ENCODE measurements at regions of chr1 and their contacts with region 1.

Region 1: GRCh38 chr1:25487628-25488027 is 55.8 kb upstream of the LDLRAP1 start:
- DNase-seq: no peak
- H3K4me3 ChIP-seq: no peak overlapping the region
- H3K27ac ChIP-seq: no peak overlapping the region
- H3K4me1 ChIP-seq: no peaks in the 10 kb centered on the region
- H3K27me3 ChIP-seq: no peaks in the 10 kb centered on the region
- CTCF ChIP-seq: peak; percentile 42 to 58
- POLR2A ChIP-seq: no peak

Region 2: DNA sequence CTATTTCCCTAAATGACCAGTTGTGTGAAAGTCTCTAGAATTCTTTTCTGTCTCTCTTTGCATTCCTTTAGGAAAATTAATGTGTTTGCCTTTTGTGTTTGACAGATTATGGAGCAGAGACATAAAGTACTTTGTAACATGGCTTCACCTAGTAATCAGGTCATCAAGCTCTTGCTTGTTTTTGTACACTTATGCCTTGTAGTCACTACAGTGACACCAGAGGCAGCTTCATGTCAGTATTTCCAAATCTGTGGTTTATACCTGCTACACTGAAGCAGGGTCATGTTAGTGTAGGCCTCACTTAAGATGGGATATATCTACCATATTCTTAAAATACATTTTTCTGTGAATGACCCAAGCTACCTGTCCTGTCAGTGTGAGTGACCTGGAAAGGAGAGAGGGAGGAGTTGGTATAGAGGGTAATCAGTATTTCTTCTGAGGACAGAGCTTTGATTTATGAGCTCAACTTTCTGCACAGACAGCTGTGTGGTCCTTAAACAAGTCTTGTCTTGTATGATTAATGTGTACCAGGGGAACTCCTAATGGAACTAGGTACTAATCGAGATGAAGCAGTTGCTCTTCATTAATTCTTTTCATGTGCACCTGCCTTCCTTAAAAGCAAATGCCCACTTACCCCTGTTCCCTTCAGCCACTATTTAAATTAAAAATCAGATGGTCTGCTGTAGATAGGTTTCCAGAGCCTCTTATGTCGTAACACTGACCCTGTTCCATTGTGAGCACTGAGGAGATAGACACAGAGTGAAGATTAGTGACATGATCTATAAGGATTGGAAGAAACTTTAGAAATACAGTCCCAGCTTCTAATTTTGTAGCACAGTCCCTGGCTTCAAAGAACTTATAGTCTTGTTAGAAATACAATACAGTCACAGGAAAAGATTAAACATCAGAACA is 11.2 kb before region 1 on chr1:
- CTCF ChIA-PET with region 1: interaction called, 10 read pairs
- POLR2A ChIA-PET with region 1: no interaction called
- dilution Hi-C with region 1: no loop called
- intact Hi-C with region 1: no loop called
- DNase-seq: no peak
- H3K4me3 ChIP-seq: no peak overlapping the region
- H3K27ac ChIP-seq: no peak overlapping the region
- H3K4me1 ChIP-seq: no peaks in the 10 kb centered on the region
- H3K27me3 ChIP-seq: no peaks in the 10 kb centered on the region
- CTCF ChIP-seq: no peak
- POLR2A ChIP-seq: no peak

Region 3: DNA sequence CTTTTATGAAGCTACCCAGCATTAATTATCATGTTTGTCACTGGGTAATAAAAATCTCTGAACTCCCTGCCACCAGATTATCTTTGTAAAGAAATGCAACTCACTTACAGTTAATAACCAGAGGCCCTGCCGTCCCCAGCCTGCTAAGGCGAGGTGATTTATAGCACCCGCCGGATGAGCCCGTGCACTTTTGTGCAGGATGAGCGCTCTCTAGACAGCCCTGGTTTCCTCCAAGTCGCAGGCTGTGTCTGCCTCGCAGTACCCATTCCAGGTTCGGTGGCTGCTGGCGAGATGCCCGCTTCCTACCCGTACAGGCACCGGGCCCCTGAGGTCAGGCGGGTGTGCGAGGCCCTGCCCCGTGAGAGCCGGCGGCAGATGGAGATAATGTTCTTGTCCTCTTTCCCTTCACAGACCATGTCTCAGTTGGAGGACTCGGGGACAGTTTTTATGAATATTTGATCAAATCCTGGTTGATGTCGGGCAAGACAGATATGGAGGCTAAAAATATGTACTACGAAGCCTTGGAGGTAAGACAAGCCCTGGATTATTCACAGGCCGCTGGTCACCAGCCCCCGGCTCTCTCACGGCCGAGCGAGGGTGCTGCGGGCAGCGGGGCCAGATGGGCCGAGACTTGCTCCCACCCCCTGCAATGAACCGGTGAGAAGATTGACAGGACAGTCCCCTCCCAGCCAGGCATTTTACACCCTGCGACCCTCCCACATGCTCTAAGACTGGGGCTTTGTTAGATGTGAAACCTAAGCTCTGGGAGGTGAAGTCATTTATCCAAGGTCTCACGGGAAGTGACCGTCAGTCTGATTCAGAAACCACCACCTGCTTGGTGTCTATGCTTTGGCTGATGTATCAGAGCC is 283.9 kb after region 1 on chr1:
- CTCF ChIA-PET with region 1: no interaction called
- POLR2A ChIA-PET with region 1: no interaction called
- dilution Hi-C with region 1: no loop called
- intact Hi-C with region 1: no loop called
- DNase-seq: no peak
- H3K4me3 ChIP-seq: no peak overlapping the region
- H3K27ac ChIP-seq: no peak overlapping the region
- H3K4me1 ChIP-seq: no peaks in the 10 kb centered on the region
- H3K27me3 ChIP-seq: no peaks in the 10 kb centered on the region
- CTCF ChIP-seq: no peak
- POLR2A ChIP-seq: no peak

Measured in endothelial cell of umbilical vein (primary cell).